CD14-positive monocyte (primary cell): ENCODE measurements at regions of chr15 and their contacts with region 1.

Region 1: DNA sequence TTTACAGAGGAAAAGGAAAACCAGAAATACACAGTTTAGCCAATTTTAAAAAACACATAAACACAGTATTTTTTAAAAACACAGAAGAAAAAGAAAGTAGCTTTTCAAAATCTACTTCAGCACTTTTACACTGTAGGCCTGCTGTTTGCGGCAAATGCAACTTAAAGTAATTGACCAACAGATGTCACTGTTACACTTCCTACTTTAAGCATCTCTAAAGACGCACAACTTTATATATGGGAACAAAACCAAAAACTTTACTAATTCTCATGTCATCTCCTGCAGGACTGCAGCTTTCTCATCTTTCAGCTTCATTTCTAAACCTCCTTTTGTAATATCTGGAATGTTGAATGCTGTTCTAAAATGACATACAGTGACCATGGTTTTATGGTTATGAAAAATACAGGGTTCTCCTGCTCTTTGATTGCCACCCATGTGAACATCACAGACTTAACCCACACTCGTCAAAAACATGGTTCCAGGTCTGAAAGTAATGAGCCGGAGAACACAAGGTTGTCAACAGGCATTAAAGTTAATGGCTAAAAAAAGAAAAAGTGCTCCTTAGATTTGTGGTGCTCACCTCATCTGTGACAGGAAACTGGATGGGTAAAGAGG is 107.9 kb downstream of the FMN1 start:
- DNase-seq: peak; percentile 34 to 58 (median 55)
- H3K4me3 ChIP-seq: no peak overlapping the region
- H3K4me3 Mint-ChIP-seq: no peak overlapping the region
- H3K27ac ChIP-seq: no peak overlapping the region
- H3K27ac Mint-ChIP-seq: no peak overlapping the region
- H3K4me1 ChIP-seq: peaks cover 9 to 14% of the 10 kb centered on the region in 2 donors
- H3K4me1 Mint-ChIP-seq: peaks cover 13% of the 10 kb centered on the region
- H3K27me3 ChIP-seq: no peaks in the 10 kb centered on the region
- H3K27me3 Mint-ChIP-seq: peaks cover 0 to 1% (median 0%) of the 10 kb centered on the region in 3 donors
- CTCF ChIP-seq: peak; percentile 62

Region 2: DNA sequence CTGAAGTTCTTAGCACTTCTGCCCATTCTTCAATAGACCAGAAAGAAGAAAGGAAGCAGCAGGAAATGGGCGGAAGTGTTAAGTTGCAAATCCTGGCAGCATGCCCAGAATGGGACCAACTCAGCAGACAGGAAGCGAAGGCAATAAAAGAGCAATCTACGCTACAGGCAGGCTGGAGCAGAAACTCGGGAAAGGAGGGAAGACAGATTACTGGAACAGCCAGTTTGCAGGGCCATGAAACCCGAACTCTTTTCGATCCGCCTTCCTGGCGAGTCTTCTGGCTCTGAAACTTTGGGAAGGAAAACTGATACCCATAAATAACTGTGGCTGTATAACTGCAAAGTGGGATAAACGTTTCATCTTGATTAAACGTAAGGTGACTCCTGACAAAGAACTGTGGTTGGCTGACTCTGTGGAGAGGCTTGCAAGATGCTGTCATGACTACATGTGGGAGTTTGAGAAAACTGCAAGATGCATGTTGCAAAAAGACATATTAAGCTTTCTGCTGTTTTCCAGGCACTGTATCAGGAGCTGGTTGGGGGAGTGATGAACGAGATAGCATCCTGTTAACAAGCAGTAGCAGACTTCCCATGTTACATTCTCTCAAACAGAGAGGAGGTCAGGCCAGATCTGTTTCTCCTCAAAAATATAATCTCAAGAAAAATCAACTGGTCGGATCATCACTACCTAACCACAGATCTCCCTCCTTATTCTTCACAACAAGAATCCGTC is 40.1 kb after region 1 on chr15:
- intact Hi-C with region 1: loop called in 1 of 2 experiments (anchors 5 kb)
- DNase-seq: peak; percentile 47 to 73 (median 71)
- H3K4me3 ChIP-seq: peak overlapping the region in 1 of 3 experiments; percentile 49
- H3K4me3 Mint-ChIP-seq: peak overlapping the region; percentile 28 to 81
- H3K27ac ChIP-seq: no peak overlapping the region
- H3K27ac Mint-ChIP-seq: peak overlapping the region in 2 of 7 donors; percentile 10 to 25
- H3K4me1 ChIP-seq: peaks cover 19 to 22% of the 10 kb centered on the region in 2 donors
- H3K4me1 Mint-ChIP-seq: peaks cover 21% of the 10 kb centered on the region
- H3K27me3 ChIP-seq: no peaks in the 10 kb centered on the region
- H3K27me3 Mint-ChIP-seq: peaks cover 0 to 2% (median 0%) of the 10 kb centered on the region in 3 donors
- CTCF ChIP-seq: no peak

Region 3: DNA sequence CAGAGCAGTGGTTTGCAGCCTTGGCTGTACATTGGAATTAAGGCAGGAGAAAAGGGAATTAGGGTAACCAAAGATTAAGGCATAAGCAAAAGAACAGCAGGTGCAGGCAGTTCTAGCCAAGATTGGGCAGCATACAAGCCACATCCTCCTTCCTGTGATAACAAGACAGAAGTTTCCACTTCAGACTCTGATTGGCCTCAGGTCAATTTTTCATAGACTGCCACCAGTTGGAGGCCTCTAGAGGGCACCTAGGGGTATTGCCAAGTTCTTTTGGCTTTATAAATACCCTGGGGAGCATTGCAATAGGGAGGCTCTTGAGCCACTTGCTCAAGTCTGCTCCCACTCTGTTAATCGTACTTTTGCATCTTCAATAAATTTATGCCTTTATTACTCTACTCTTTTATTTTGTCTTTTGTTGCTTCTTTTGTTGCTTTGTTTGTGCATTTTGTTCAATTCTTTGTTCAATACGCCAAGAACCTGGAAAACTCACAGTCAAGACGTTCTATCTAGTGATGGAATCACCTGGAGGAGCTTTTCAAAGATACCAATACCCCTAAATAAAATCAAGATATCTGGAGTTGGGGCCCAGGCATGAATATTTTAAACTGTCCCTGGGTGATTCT is 140.1 kb after region 1 on chr15:
- intact Hi-C with region 1: loop called in 1 of 2 experiments (anchors 10 kb)
- DNase-seq: peak; percentile 64 to 73 (median 68)
- H3K4me3 ChIP-seq: no peak overlapping the region
- H3K4me3 Mint-ChIP-seq: no peak overlapping the region
- H3K27ac ChIP-seq: no peak overlapping the region
- H3K27ac Mint-ChIP-seq: no peak overlapping the region
- H3K4me1 ChIP-seq: no peaks in the 10 kb centered on the region
- H3K4me1 Mint-ChIP-seq: no peaks in the 10 kb centered on the region
- H3K27me3 ChIP-seq: no peaks in the 10 kb centered on the region
- H3K27me3 Mint-ChIP-seq: peaks cover 5 to 8% (median 5%) of the 10 kb centered on the region in 3 donors
- CTCF ChIP-seq: peak; percentile 70

Region 4: GRCh38 chr15:33639978-33640377 is 553.4 kb after region 1 on chr15:
- intact Hi-C with region 1: no loop called
- DNase-seq: no peak
- H3K4me3 ChIP-seq: no peak overlapping the region
- H3K4me3 Mint-ChIP-seq: peak overlapping the region in 1 of 2 donors; percentile 8
- H3K27ac ChIP-seq: no peak overlapping the region
- H3K27ac Mint-ChIP-seq: no peak overlapping the region
- H3K4me1 ChIP-seq: no peaks in the 10 kb centered on the region
- H3K4me1 Mint-ChIP-seq: peaks cover 4% of the 10 kb centered on the region
- H3K27me3 ChIP-seq: no peaks in the 10 kb centered on the region
- H3K27me3 Mint-ChIP-seq: peaks cover 0 to 5% (median 5%) of the 10 kb centered on the region in 3 donors
- CTCF ChIP-seq: no peak

Region 5: DNA sequence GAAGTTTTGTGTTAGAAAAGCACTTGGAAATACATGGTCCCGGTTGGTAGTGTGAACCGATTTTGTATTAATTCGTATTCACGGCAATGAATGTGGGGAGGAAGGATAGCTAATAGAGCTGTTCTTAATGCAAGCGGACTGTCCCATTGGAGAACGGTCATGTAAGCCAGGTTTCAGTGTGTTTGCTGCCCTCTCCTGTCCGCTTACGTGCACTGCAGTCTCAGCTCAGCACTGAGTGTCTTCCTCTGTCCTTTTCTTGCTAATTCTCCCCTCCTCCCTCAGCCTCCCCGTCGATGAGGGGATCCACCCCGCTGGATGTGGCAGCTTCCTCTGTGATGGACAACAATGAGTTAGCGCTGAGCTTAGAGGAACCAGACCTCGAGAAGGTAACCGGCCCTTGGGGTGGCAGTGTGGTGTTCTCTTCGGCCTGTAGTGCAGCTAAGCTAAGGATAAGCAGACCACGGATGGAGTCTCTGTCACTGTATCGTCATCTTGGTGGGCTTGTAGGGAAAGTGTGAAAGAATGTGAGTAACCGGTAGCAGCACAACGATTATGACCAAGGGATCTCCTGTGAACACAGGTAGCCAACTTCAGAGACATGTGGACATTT is 614.2 kb after region 1 on chr15:
- intact Hi-C with region 1: loop called (anchors 5 to 10 kb)
- DNase-seq: peak; percentile 23 to 54 (median 44)
- H3K4me3 ChIP-seq: no peak overlapping the region
- H3K4me3 Mint-ChIP-seq: no peak overlapping the region
- H3K27ac ChIP-seq: no peak overlapping the region
- H3K27ac Mint-ChIP-seq: peak overlapping the region in 2 of 7 donors; percentile 10 to 52
- H3K4me1 ChIP-seq: no peaks in the 10 kb centered on the region
- H3K4me1 Mint-ChIP-seq: peaks cover 4% of the 10 kb centered on the region
- H3K27me3 ChIP-seq: no peaks in the 10 kb centered on the region
- H3K27me3 Mint-ChIP-seq: peaks cover 0 to 4% (median 0%) of the 10 kb centered on the region in 3 donors
- CTCF ChIP-seq: peak; percentile 87